ENCODE measurements at regions of chr1 and their contacts with region 1.

Region 1: GRCh38 chr1:6205849-6206519 is at the start of gene RNF207:
- DNase-seq: peak; percentile 83
- ATAC-seq: peak; percentile 60
- H3K4me3 Mint-ChIP-seq: peak within 1 kb of the TSS; percentile 61
- H3K27ac Mint-ChIP-seq: 0 out of 2 replicates have a peak within 1 kb of the TSS, but pooled peaks have one; percentile 45
- H3K4me1 Mint-ChIP-seq: peaks cover 24% of the 10 kb centered on the region
- H3K27me3 Mint-ChIP-seq: peaks cover 29% of the 10 kb centered on the region
- CTCF ChIP-seq: no peak
- total RNA-seq, gene RNF207: 9.2 to 14.0 TPM (median 12.9 TPM) in 3 replicates

Region 2: GRCh38 chr1:6094801-6095505 is 111.0 kb before region 1 on chr1:
- CTCF ChIA-PET with region 1: no interaction called
- POLR2A ChIA-PET with region 1: no interaction called
- DNase-seq: no peak
- ATAC-seq: no peak
- H3K4me3 Mint-ChIP-seq: no peak overlapping the region
- H3K27ac Mint-ChIP-seq: no peak overlapping the region
- H3K4me1 Mint-ChIP-seq: no peaks in the 10 kb centered on the region
- H3K27me3 Mint-ChIP-seq: no peaks in the 10 kb centered on the region
- CTCF ChIP-seq: no peak

Region 3: DNA sequence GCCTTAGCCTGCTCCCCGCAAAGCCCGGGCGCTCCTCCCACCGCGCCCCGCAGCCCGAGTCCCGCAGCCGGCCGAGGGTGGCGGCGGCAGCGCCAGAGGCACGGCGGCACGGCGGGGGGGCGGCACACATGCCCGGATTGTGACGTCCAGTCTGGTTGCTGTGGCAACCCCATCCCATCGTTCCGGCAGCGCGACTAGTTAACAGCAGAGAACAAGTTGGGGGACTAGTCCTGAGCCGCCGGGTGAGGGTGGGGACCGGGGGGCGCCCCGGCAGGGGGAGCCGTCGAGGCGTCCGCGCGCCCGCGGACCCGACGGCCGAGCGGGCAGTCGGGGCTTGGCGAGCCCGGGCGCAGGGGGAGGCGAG is 25.8 kb before region 1 on chr1 and contains the start of gene CHD5:
- CTCF ChIA-PET with region 1: interaction called, 47 read pairs
- POLR2A ChIA-PET with region 1: interaction called, 4 read pairs
- DNase-seq: peak; percentile 74
- ATAC-seq: peak; percentile 6; the same call in 1 of the 2 replicates
- H3K4me3 Mint-ChIP-seq: peak within 1 kb of the TSS; percentile 69
- H3K27ac Mint-ChIP-seq: no peak within 1 kb of the TSS
- H3K4me1 Mint-ChIP-seq: peaks cover 38% of the 10 kb centered on the region
- H3K27me3 Mint-ChIP-seq: peaks cover 56% of the 10 kb centered on the region
- CTCF ChIP-seq: no peak
- total RNA-seq, gene CHD5: 1.6 to 2.4 TPM (median 1.6 TPM) in 3 replicates

Region 4: GRCh38 chr1:6185635-6186382 is 20.2 kb before region 1 on chr1:
- CTCF ChIA-PET with region 1: interaction called, 77 read pairs
- POLR2A ChIA-PET with region 1: interaction called, 8 read pairs
- DNase-seq: peak; percentile 62
- ATAC-seq: no peak
- H3K4me3 Mint-ChIP-seq: no peak overlapping the region
- H3K27ac Mint-ChIP-seq: peak overlapping the region; percentile 42
- H3K4me1 Mint-ChIP-seq: peaks cover 52% of the 10 kb centered on the region
- H3K27me3 Mint-ChIP-seq: peaks cover 23% of the 10 kb centered on the region
- CTCF ChIP-seq: peak; percentile 43; the same call in 1 of the 2 replicates

Region 5: GRCh38 chr1:6220241-6220640 is 14.3 kb after region 1 on chr1:
- CTCF ChIA-PET with region 1: interaction called, 39 read pairs
- POLR2A ChIA-PET with region 1: interaction called, 3 read pairs
- DNase-seq: no peak
- ATAC-seq: no peak; the same call in 1 of the 2 replicates
- H3K4me3 Mint-ChIP-seq: no peak overlapping the region
- H3K27ac Mint-ChIP-seq: peak overlapping the region; percentile 38; the same call in 1 of the 2 replicates
- H3K4me1 Mint-ChIP-seq: no peaks in the 10 kb centered on the region
- H3K27me3 Mint-ChIP-seq: no peaks in the 10 kb centered on the region
- CTCF ChIP-seq: no peak

Measured in WTC11 (cell line).